ENCODE measurements at regions of chr22 and their contacts with region 1.

Region 1: GRCh38 chr22:35930933-35931332 is 97.7 kb downstream of the RBFOX2 start:
- DNase-seq: no peak
- H3K4me3 ChIP-seq: no peak overlapping the region
- H3K27ac ChIP-seq: no peak overlapping the region
- H3K4me1 ChIP-seq: peaks cover 6 to 25% (median 6%) of the 10 kb centered on the region in 3 donors
- H3K27me3 ChIP-seq: no peaks in the 10 kb centered on the region
- CTCF ChIP-seq: peak in 5 of 6 experiments; percentile 35 to 64 (median 45)
- POLR2A ChIP-seq: no peak

Region 2: GRCh38 chr22:35642305-35642741 is 288.6 kb before region 1 on chr22:
- intact Hi-C with region 1: loop called (anchors 5 kb)
- DNase-seq: no peak
- H3K4me3 ChIP-seq: no peak overlapping the region
- H3K27ac ChIP-seq: peak overlapping the region in 1 of 4 donors; percentile 56
- H3K4me1 ChIP-seq: peaks cover 15 to 54% (median 28%) of the 10 kb centered on the region in 3 donors
- H3K27me3 ChIP-seq: no peaks in the 10 kb centered on the region
- CTCF ChIP-seq: no peak
- POLR2A ChIP-seq: no peak

Region 3: DNA sequence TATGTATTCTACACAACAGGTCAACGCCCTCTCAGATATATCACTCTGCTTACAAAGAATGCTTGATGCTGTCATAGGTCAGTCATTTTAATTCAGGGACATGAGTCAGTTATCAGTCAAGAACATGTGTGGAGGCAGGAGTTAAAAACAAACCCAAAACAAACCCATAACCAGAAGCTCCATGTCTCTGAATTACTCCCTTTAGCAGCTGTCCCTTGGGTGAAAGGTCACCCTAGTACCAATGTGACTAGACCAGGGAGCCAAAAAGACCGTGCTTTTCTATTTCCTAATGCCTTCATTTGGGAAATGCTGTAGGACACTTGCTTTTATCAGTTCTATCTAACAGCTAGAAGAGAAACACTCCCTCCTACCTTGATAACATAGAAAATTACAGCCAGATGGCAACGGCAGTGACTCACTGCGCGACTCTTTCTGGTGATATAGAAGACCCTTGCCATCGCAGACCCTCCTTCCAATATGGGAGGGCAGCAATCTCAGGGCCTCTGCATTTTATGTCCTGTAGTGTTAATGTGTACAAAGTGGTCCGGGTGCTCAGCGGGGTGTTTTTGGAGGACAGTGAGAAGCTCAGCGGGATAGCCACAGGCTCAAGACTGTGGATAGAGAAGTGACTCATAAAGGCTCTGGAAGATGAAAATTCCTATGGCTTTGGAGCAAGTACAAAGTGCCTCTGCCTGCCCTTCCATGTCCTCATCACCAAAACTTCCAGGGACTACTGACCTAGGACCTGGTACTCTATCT is 188.4 kb before region 1 on chr22:
- intact Hi-C with region 1: no loop called
- DNase-seq: no peak
- H3K4me3 ChIP-seq: no peak overlapping the region
- H3K27ac ChIP-seq: peak overlapping the region in 2 of 4 donors; percentile 24 to 57
- H3K4me1 ChIP-seq: peaks cover 0 to 24% (median 0%) of the 10 kb centered on the region in 3 donors
- H3K27me3 ChIP-seq: no peaks in the 10 kb centered on the region
- CTCF ChIP-seq: no peak
- POLR2A ChIP-seq: no peak

Region 4: GRCh38 chr22:36065775-36066559 is 135.0 kb after region 1 on chr22:
- intact Hi-C with region 1: loop called (anchors 5 kb)
- DNase-seq: no peak
- H3K4me3 ChIP-seq: peak overlapping the region; percentile 37 to 68 (median 59)
- H3K27ac ChIP-seq: peak overlapping the region; percentile 77 to 90 (median 88)
- H3K4me1 ChIP-seq: peaks cover 2 to 16% (median 13%) of the 10 kb centered on the region in 3 donors
- H3K27me3 ChIP-seq: no peaks in the 10 kb centered on the region
- CTCF ChIP-seq: peak; percentile 93 to 100 (median 99)
- POLR2A ChIP-seq: peak in 1 of 4 donors; percentile 24

Measured in esophagus squamous epithelium (tissue), 5 donors.